Kidney (tissue), 22 donors: ENCODE measurements at regions of chr2 and their contacts with region 1.

Region 1: DNA sequence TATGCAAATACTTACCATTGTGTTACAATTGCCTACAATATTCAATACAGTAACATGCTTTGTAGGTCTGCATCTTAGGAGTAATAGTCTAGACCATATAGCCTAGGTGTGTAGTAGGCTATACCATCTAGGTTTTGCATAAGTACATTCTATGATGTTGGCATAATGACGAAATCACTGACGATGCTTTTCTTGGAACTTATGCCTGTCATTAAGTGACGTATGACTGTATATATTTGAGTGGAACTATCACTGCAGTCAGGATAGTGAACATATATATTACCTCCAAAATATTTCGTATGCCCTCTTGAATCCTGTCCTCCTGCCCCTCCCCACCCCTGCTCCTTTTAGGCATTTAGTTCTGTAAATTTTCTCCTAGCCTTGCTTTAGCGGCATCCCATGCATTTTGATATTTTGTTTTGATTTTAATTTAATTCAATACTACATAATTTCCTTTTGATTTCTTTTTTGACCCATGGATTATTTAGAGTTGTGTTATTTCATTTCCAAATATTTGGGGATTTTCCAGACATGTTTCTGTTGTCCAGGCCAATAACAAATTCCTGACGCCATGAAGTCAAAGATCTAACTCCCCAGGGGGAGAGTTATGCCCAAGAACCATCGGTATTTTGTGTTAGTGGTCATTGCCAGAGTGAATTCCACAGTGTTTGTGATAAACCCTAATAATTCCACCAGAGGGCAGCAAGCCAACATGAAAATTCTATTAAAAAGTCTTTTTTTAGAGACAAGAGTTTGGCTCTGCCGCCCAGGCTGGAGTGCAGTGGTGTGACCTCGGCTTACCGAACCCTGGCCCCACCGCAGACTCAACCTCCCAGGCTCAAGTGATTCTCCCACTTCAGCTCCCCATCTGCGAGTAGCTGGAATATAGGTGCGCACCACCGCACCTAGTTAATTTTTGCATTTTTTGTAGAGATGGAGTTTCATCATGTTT is 24.2 kb upstream of the CASP8 start:
- DNase-seq: peak in 4 of 5 donors; percentile 45 to 89 (median 70)
- H3K4me3 ChIP-seq: peak overlapping the region in 2 of 3 donors; percentile 10 to 32
- H3K27ac ChIP-seq: peak overlapping the region in 1 of 2 donors; percentile 17
- H3K4me1 ChIP-seq: peaks cover 3 to 8% (median 7%) of the 10 kb centered on the region in 3 donors
- H3K27me3 ChIP-seq: no peaks in the 10 kb centered on the region
- CTCF ChIP-seq: peak; percentile 81

Region 2: DNA sequence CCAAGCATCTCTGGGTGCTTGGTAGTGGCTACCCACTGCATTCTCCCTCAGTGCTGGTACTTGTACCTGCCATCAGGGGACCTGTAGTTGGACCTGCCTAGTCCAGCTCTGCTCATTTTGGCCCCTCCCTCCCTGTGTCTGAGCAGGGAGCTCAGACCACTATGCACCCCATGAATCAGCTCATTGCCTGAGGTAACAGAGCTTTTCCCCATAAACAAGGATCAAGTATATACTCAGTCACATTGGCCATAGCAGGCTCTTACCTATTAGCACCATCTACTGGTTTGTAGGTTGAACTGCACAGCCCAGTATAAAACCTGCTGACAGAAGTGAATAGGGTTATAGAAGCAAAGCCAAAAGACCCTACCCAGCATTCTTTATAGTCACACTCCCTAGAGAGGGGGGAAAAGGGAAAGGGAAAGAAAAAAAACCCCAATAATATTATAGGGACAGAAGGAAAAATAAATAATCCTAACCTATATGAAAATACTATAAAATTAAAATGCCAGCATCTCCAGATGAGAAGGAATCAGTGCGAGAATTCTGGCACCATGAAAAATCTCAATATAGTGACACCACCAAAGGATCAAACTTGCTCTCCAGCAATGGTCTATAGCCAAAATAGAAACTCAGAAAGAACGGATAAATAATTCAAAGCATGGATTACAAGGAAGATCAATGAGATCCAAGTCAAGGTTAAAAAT is 127.9 kb after region 1 on chr2:
- intact Hi-C with region 1: loop called (anchors 5 kb)
- DNase-seq: peak in 2 of 5 donors; percentile 22 to 40
- H3K4me3 ChIP-seq: no peak overlapping the region
- H3K27ac ChIP-seq: no peak overlapping the region
- H3K4me1 ChIP-seq: no peaks in the 10 kb centered on the region
- H3K27me3 ChIP-seq: no peaks in the 10 kb centered on the region
- CTCF ChIP-seq: peak; percentile 75